ENCODE measurements at regions of chr13 and their contacts with region 1.

Region 1: GRCh38 chr13:41960639-41961465 is at the start of gene VWA8:
- DNase-seq: peak; percentile 90
- ATAC-seq: peak; percentile 93
- H3K4me3 Mint-ChIP-seq: peak within 1 kb of the TSS; percentile 93
- H3K27ac Mint-ChIP-seq: peak within 1 kb of the TSS; percentile 96
- H3K4me1 Mint-ChIP-seq: peaks cover 51% of the 10 kb centered on the region
- H3K27me3 Mint-ChIP-seq: peaks cover 2% of the 10 kb centered on the region
- CTCF ChIP-seq: no peak
- total RNA-seq, gene VWA8: 26.3 to 27.5 TPM

Region 2: GRCh38 chr13:42039946-42040729 is 79.3 kb after region 1 on chr13:
- CTCF ChIA-PET with region 1: no interaction called
- POLR2A ChIA-PET with region 1: interaction called, 4 read pairs
- intact Hi-C with region 1: loop called (anchors 5 kb)
- DNase-seq: peak; percentile 85
- ATAC-seq: peak; percentile 79
- H3K4me3 Mint-ChIP-seq: peak overlapping the region; percentile 70
- H3K27ac Mint-ChIP-seq: peak overlapping the region; percentile 79
- H3K4me1 Mint-ChIP-seq: peaks cover 26% of the 10 kb centered on the region
- H3K27me3 Mint-ChIP-seq: peaks cover 2% of the 10 kb centered on the region
- CTCF ChIP-seq: no peak